Ascending aorta (tissue), 2 donors: ENCODE measurements at regions of chr9 and their contacts with region 1.

Region 1: DNA sequence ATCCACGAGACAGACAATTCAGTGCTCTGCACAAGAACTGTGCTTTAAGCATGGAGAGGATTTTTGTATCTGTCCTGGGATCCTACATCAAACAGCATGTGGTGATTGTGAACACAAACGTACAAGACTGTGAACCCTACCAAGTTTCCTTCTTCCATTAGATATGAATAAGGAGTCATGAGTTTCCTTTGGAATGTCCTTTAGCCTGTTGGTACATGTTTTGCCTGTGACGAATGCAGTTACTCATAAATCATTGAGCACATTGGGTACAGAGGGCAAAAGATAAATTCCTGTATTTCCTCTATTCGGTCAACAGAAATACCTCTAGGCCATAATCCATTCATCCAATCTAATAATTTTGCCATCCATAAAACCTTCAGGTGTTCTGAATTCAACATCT is 61.5 kb downstream of the FXN start:
- DNase-seq: no peak
- H3K4me3 ChIP-seq: no peak overlapping the region
- H3K27ac ChIP-seq: peak overlapping the region; percentile 74 to 87
- H3K4me1 ChIP-seq: peaks cover 0 to 29% of the 10 kb centered on the region in 2 donors
- H3K27me3 ChIP-seq: no peaks in the 10 kb centered on the region
- CTCF ChIP-seq: no peak

Region 2: DNA sequence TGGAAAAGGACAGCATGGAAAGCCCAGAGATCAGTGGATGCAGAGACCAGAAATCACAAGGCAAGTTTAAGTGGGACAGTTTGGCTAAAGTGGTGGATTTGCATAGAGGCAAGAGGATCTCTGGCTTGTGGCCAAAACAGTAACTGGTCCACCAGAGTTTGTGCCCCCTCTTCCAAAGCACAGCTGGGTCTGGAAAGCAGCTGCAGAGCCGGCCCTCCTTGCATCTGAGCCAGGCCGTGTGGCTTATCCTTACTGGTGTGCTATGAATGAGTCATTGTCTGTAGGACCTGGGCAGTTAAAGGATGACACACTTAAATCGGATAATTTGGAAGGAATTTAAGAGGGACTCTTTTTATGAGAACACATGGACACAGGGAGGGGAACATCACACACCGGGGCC is 245.4 kb before region 1 on chr9:
- intact Hi-C with region 1: no loop called
- DNase-seq: no peak
- H3K4me3 ChIP-seq: no peak overlapping the region
- H3K27ac ChIP-seq: no peak overlapping the region
- H3K4me1 ChIP-seq: no peaks in the 10 kb centered on the region
- H3K27me3 ChIP-seq: no peaks in the 10 kb centered on the region
- CTCF ChIP-seq: no peak

Region 3: GRCh38 chr9:69054989-69055388 is 42.1 kb before region 1 on chr9:
- intact Hi-C with region 1: loop called (anchors 1 kb)
- DNase-seq: no peak
- H3K4me3 ChIP-seq: no peak overlapping the region
- H3K27ac ChIP-seq: no peak overlapping the region
- H3K4me1 ChIP-seq: peaks cover 4% of the 10 kb centered on the region in 2 donors
- H3K27me3 ChIP-seq: no peaks in the 10 kb centered on the region
- CTCF ChIP-seq: no peak

Region 4: DNA sequence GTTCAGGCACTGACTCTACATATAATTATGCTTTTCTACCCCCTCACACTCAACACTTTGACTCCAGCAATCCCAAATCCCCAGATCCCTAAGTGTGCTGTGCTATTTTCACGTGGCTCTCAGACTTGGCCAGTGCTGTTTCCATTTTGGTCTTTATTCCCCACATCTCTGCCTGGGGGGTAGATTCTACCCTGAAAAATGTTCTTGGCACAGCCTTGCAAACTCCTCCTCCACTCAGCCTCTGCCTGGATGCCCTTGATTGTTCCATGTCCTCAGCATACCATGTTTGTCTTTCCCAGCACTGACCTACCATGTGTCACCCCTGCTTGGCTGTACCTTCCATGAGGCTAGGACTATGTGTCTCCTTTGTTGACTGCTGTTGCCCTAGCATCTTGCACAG is 18.5 kb before region 1 on chr9:
- intact Hi-C with region 1: loop called (anchors 2 kb)
- DNase-seq: peak in 1 of 2 donors; percentile 89
- H3K4me3 ChIP-seq: no peak overlapping the region
- H3K27ac ChIP-seq: peak overlapping the region; percentile 72 to 73
- H3K4me1 ChIP-seq: peaks cover 12 to 28% of the 10 kb centered on the region in 2 donors
- H3K27me3 ChIP-seq: no peaks in the 10 kb centered on the region
- CTCF ChIP-seq: no peak

Region 5: GRCh38 chr9:69157751-69158466 is 60.8 kb after region 1 on chr9:
- intact Hi-C with region 1: no loop called
- DNase-seq: no peak
- H3K4me3 ChIP-seq: no peak overlapping the region
- H3K27ac ChIP-seq: no peak overlapping the region
- H3K4me1 ChIP-seq: no peaks in the 10 kb centered on the region
- H3K27me3 ChIP-seq: no peaks in the 10 kb centered on the region
- CTCF ChIP-seq: no peak

Region 6: DNA sequence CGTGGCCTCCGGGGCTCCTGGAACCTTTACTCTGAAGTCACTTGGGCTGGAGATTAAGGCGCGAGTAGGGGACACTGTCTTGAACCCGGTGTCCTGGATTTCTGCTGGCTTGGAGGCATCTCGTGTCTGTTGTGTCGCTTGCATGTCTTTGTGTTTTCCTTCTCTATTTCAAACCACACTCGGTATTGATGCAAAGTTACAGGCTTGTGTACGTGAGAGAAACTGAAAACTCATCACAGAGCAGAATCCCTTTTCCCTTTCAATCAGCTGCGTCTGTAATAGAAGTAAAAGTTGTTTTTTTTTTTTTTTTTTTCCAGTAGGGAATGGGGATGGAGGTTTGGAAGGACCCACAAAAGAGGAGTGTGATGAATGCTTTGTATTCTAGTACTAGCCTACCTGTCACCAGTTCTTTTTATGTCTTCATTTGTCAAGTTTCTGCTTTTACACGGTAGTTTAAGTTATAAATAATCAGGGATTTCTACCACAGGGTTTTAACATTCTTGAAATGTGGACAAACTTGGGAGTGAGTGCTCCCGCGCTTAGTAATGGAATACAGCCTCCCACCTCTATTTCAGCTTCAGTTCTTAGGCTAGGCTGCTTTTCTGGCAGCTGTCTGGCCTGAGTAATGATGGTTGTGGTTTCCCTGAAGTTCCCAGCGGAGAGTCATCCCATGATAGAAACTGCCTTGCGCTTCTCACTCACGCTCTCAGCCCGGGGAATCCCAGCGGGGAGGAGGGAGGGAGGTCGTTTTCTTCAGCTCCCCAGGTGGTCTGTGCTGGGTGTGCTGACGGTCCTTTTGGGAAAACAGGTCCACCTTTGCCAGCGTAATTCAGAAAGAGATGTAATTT is 77.8 kb after region 1 on chr9:
- intact Hi-C with region 1: loop called (anchors 5 kb)
- DNase-seq: peak; percentile 35 to 88
- H3K4me3 ChIP-seq: peak overlapping the region; percentile 68 to 89
- H3K27ac ChIP-seq: peak overlapping the region; percentile 77 to 87
- H3K4me1 ChIP-seq: peaks cover 5 to 18% of the 10 kb centered on the region in 2 donors
- H3K27me3 ChIP-seq: no peaks in the 10 kb centered on the region
- CTCF ChIP-seq: no peak